ENCODE measurements at regions of chr21 and their contacts with region 1.

Region 1: GRCh38 chr21:39467746-39468145 is 16.0 kb downstream of the SH3BGR start:
- H3K4me3 ChIP-seq: no peak overlapping the region
- H3K27ac ChIP-seq: no peak overlapping the region
- H3K4me1 ChIP-seq: no peaks in the 10 kb centered on the region
- CTCF ChIP-seq: no peak

Region 2: DNA sequence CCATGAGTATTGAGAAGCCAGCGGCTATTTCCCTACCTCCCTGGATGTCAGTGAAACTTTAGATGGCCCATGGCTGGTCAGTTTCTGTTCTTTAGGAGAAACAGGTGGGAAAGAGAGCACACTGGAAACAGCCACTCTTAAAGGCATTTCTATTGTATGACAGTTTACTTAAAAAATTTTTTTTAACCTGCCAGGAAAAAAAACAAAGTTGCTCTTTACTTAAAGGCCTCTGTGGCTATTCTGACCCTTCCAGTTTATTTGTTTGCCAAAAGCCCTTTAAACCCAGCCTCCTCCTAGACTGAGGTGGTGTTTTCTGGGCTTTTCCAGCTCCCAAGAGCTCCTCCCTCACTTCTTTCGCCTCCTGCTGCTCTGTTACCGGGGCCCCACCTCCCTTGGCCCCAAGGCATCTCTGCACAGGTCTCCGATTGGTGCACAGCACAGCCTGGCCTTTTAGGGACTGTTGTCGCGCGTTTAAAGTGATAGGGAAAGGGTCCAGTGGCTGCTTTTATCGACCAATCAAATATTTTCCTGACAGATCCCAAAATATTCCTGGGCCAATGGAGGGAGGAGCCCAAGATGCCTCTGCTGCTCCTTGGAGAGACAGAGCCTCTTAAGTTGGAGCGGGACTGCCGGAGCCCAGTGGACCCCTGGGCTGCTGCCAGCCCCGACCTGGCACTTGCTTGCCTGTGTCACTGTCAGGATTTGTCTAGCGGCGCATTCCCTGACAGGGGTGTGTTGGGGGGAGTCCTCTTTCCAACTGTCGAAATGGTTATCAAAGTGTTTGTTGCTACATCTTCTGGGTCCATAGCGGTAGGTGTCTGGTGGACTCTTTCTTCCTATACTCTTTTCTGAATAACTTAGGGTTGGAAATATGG is 16.2 kb before region 1 on chr21 and contains the start of gene SH3BGR:
- CTCF ChIA-PET with region 1: no interaction called
- POLR2A ChIA-PET with region 1: no interaction called
- H3K4me3 ChIP-seq: no peak within 1 kb of the TSS
- H3K27ac ChIP-seq: peak within 1 kb of the TSS; percentile 32; the same call in 1 of the 2 replicates
- H3K4me1 ChIP-seq: peaks cover 15% of the 10 kb centered on the region
- CTCF ChIP-seq: no peak

Region 3: DNA sequence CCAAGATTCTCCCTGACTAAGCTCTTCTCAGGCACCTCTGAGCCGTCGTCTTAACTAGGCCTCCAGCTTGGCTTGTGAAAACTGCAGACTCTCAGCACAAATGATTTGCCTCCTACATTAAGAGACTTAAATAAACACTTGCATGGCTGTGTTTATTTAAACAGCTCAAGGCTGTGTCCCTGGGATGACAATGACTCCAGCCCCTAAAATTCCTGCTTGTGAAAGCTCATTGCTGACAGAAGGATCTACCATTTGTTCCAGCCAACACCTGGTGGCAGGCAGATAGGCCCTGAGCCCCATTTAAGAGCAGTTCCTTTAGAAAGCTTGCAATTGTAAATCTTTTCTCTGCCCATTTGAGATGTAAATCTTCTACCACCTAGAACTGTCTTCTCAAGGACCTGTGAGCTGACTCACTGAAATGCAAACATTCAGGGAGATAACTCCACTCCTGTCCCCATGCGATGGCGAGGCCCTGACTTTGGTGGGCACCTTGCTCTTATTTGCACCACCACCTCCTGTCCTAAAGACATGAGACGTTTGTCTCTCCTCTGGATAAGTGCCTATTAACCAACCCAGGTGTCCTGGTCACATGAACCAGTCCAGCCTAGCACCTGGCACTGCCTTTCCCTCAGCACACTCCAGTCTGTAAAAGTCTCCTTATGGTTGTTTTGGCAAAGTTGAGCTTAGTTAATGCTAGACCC is 384.4 kb after region 1 on chr21:
- CTCF ChIA-PET with region 1: interaction called, 10 read pairs
- POLR2A ChIA-PET with region 1: no interaction called
- H3K4me3 ChIP-seq: no peak overlapping the region
- H3K27ac ChIP-seq: peak overlapping the region; percentile 34; the same call in 1 of the 2 replicates
- H3K4me1 ChIP-seq: peaks cover 10% of the 10 kb centered on the region; the same call in 1 of the 2 replicates
- CTCF ChIP-seq: no peak

Measured in HEK293 (cell line).